PC-3 (cell line): ENCODE measurements at regions of chr2 and their contacts with region 1.

Region 1: DNA sequence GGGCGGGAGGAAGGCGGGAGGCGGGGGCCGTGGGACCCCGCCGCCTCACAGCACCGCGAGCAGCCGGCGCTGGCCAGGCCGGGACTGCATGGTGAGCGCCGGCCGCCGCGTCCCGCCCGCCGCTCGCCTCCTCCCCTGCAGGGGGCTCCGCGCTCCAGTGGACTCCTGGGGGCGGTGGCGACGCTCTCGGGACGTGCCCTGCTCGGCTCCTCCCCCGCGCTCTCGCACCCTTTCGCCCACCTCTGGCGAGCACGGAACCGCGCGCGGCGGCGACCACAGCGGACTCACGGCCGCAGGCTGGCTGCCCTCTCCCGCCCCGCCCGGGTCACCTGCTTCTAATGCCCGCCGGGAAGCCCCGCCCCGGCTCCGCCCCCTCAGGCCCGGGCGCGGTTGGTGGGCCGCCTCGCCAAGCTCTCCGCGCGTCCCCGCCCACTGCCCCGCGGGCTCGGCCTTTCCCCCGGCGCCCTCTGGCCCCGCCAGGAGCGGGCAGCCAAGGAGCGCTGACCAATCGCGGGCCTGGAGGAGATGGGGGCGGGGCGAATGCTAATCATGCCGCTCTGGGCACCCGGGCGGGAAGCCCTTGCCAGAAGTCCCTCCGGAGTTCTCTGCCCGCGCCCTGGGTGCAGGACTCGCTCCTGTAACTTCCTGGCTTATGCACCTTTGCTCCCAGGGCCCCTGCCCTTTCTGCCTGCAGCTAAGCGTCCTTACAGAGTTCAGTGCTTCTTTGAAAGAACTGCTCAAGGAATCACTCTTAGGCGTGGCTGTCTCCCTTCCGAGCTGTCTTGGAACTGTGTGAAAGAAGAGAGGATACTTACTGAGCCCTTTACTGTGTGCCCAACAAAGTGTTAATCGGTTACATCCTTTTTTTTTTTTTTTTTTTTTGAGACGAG is at the start of gene FZD5:
- DNase-seq: peak; percentile 98
- ATAC-seq: peak; percentile 76
- H3K4me3 ChIP-seq: peak within 1 kb of the TSS; percentile 94
- H3K27ac ChIP-seq: peak within 1 kb of the TSS; percentile 35
- H3K4me1 ChIP-seq: peaks cover 14% of the 10 kb centered on the region; the same call in 1 of the 2 replicates
- H3K27me3 ChIP-seq: no peaks in the 10 kb centered on the region
- CTCF ChIP-seq: peak; percentile 35; the same call in 1 of the 2 replicates
- total RNA-seq, gene FZD5: 7.2 and 7.5 TPM in 2 replicates

Region 2: GRCh38 chr2:207670887-207671286 is 99.0 kb before region 1 on chr2:
- CTCF ChIA-PET with region 1: no interaction called
- POLR2A ChIA-PET with region 1: no interaction called
- intact Hi-C with region 1: no loop called
- DNase-seq: no peak
- ATAC-seq: no peak
- H3K4me3 ChIP-seq: no peak overlapping the region
- H3K27ac ChIP-seq: no peak overlapping the region
- H3K4me1 ChIP-seq: no peaks in the 10 kb centered on the region
- H3K27me3 ChIP-seq: no peaks in the 10 kb centered on the region
- CTCF ChIP-seq: no peak

Region 3: GRCh38 chr2:207758025-207758424 is 11.8 kb before region 1 on chr2:
- CTCF ChIA-PET with region 1: no interaction called
- POLR2A ChIA-PET with region 1: no interaction called
- intact Hi-C with region 1: no loop called
- DNase-seq: no peak
- ATAC-seq: no peak
- H3K4me3 ChIP-seq: no peak overlapping the region
- H3K27ac ChIP-seq: no peak overlapping the region
- H3K4me1 ChIP-seq: no peaks in the 10 kb centered on the region
- H3K27me3 ChIP-seq: no peaks in the 10 kb centered on the region
- CTCF ChIP-seq: no peak

Region 4: DNA sequence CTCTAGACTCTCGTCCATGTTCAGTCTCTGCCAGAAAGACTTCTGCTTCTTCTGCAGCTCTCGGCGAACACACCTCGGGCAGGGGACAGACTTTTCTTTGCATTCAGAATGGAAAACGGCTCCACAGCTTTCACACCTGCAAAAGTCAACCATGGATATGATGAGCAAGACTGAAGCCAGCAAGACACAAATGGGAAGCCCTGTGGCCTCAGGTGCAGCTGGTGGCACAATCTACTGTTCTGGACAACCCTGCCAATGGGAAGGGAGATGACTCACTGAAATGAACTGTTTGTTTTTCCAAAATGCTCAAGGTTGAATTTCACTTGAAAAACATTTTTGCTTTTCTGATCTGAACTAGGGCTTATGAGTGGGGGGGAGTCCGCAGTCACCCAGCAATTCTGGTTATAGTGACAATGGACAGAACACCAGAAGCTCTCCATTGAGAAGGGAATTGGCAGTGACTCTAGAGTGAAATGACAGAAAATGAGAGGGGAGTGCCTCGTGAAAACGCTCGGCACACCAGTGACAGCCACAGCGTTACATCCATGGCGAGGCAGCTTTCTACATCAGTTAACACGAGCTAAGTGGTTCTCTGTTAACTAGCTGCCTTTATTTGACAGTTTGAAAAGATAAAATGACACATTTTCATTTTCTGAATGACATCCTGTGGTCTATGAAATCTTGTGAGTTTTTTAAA is 58.7 kb after region 1 on chr2:
- CTCF ChIA-PET with region 1: no interaction called
- POLR2A ChIA-PET with region 1: interaction called, 4 read pairs
- intact Hi-C with region 1: loop called (anchors 2 kb)
- DNase-seq: peak; percentile 88
- ATAC-seq: peak; percentile 82
- H3K4me3 ChIP-seq: peak overlapping the region; percentile 69
- H3K27ac ChIP-seq: peak overlapping the region; percentile 86
- H3K4me1 ChIP-seq: peaks cover 38% of the 10 kb centered on the region
- H3K27me3 ChIP-seq: no peaks in the 10 kb centered on the region
- CTCF ChIP-seq: no peak

Region 5: GRCh38 chr2:207974216-207974605 is 204.4 kb after region 1 on chr2:
- CTCF ChIA-PET with region 1: no interaction called
- POLR2A ChIA-PET with region 1: interaction called, 4 read pairs
- intact Hi-C with region 1: loop called (anchors 1 kb)
- DNase-seq: no peak
- ATAC-seq: no peak
- H3K4me3 ChIP-seq: no peak overlapping the region
- H3K27ac ChIP-seq: no peak overlapping the region
- H3K4me1 ChIP-seq: no peaks in the 10 kb centered on the region
- H3K27me3 ChIP-seq: no peaks in the 10 kb centered on the region
- CTCF ChIP-seq: no peak

Region 6: GRCh38 chr2:208033758-208034502 is 264.1 kb after region 1 on chr2:
- CTCF ChIA-PET with region 1: no interaction called
- POLR2A ChIA-PET with region 1: no interaction called
- intact Hi-C with region 1: loop called (anchors 1 kb)
- DNase-seq: peak; percentile 91
- ATAC-seq: peak; percentile 93
- H3K4me3 ChIP-seq: no peak overlapping the region
- H3K27ac ChIP-seq: peak overlapping the region; percentile 29; the same call in 1 of the 2 replicates
- H3K4me1 ChIP-seq: peaks cover 17% of the 10 kb centered on the region
- H3K27me3 ChIP-seq: no peaks in the 10 kb centered on the region
- CTCF ChIP-seq: peak; percentile 76